ENCODE measurements at regions of chr14 and their contacts with region 1.

Region 1: DNA sequence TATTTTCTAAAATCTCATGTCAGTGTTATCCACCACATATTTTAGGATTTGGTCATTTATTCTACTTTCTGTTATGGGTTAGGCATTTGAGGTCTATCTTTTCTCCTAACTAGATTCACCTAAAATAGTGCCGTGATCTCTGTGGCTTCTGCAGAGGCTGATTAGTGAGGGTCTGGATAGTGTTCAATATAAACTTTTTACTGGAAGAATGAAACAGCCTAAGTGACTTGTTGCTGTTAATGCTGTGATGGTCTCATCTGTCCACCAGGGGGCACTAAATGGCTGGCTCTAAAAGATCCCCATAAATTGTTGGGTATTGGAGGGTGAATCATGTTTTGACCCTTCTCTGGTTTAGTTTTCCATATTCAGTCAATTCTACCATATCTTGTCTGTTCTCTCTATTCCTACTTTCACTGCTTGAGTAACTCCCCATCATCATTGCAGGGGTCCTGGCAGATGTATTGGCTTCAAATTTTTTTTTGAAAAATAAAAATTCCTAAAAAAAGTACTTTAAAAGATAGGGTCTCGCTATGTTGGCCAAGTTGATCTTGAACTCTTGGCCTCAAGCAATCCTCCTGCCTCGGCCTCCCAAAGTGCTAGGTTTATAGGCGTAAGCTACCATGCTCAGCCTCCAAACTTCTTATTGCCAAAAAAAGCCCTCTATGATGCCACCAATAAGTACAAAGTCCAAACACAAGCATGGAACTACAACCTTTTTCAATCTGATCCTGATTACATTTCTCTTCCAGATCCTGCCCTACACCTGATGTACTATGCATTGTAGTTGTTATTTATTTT is 6.9 kb downstream of the PABPN1 start:
- DNase-seq: peak; percentile 39
- ATAC-seq: peak; percentile 86
- H3K4me3 ChIP-seq: no peak overlapping the region
- H3K27ac ChIP-seq: no peak overlapping the region
- H3K4me1 ChIP-seq: peaks cover 3% of the 10 kb centered on the region
- H3K27me3 ChIP-seq: no peaks in the 10 kb centered on the region
- CTCF ChIP-seq: peak; percentile 80

Region 2: GRCh38 chr14:23379366-23380196 is 51.4 kb after region 1 on chr14:
- CTCF ChIA-PET with region 1: interaction called, 8 read pairs
- POLR2A ChIA-PET with region 1: no interaction called
- in situ Hi-C with region 1: no loop called
- intact Hi-C with region 1: loop called (anchors 5 kb)
- DNase-seq: peak; percentile 36
- ATAC-seq: peak; percentile 84
- H3K4me3 ChIP-seq: no peak overlapping the region
- H3K27ac ChIP-seq: no peak overlapping the region
- H3K4me1 ChIP-seq: no peaks in the 10 kb centered on the region
- H3K27me3 ChIP-seq: no peaks in the 10 kb centered on the region
- CTCF ChIP-seq: peak; percentile 91